Dorsolateral prefrontal cortex (tissue), 120 donors: ENCODE measurements at regions of chr3 and their contacts with region 1.

Region 1: GRCh38 chr3:69961706-69962439 is 37.7 kb upstream of the SAMMSON start:
- DNase-seq: no peak
- H3K4me3 ChIP-seq: no peak overlapping the region
- H3K27ac ChIP-seq: peak overlapping the region in 30 of 59 donors; percentile 1 to 71 (median 30)
- H3K27me3 ChIP-seq: no peaks in the 10 kb centered on the region
- CTCF ChIP-seq: no peak

Region 2: DNA sequence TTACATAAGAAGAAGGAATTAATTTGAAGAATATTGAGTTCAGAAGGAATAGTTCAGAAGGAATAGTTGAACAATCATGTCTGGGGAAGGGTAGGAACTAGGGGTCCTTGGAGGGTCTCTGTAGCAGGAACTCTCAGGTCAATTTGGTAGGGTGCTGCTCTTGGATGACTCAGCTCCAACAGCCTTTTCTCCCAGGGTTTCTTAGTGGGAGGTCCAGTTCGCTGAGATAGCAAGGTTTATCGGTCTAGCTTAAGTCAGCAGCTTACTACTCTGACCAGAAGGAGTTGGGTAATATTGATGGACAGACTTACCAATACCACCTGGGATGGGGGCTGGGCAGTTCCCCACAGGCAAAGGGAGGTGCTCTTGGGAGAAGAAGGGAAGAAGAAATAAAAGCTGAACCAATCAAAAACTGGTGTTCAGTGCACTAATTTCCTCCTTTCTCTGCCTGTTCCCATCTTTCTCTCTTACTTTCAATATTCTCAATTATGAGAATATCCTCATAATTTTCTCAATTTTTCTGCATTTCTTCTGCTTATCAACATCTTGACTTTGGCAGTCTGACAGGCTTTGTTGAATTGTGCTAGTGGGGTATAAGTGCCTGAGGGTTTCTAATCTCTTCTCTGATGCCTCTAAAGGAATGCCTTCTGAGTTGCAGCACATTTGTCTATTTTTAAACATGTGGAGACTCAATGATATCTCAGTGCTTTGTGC is 237.0 kb before region 1 on chr3:
- intact Hi-C with region 1: no loop called
- DNase-seq: no peak
- H3K4me3 ChIP-seq: no peak overlapping the region
- H3K27ac ChIP-seq: no peak overlapping the region
- H3K27me3 ChIP-seq: peaks cover 0 to 2% (median 0%) of the 10 kb centered on the region in 45 donors
- CTCF ChIP-seq: no peak

Region 3: GRCh38 chr3:70064194-70064779 is 102.4 kb after region 1 on chr3:
- intact Hi-C with region 1: loop called in 1 of 2 experiments (anchors 10 kb)
- DNase-seq: peak in 1 of 10 donors; percentile 20
- H3K4me3 ChIP-seq: no peak overlapping the region
- H3K27ac ChIP-seq: peak overlapping the region in 27 of 59 donors; percentile 1 to 62 (median 32)
- H3K27me3 ChIP-seq: no peaks in the 10 kb centered on the region
- CTCF ChIP-seq: peak; percentile 59 to 89 (median 80)